A549 (cell line): ENCODE measurements at regions of chr5 and their contacts with region 1.

Region 1: DNA sequence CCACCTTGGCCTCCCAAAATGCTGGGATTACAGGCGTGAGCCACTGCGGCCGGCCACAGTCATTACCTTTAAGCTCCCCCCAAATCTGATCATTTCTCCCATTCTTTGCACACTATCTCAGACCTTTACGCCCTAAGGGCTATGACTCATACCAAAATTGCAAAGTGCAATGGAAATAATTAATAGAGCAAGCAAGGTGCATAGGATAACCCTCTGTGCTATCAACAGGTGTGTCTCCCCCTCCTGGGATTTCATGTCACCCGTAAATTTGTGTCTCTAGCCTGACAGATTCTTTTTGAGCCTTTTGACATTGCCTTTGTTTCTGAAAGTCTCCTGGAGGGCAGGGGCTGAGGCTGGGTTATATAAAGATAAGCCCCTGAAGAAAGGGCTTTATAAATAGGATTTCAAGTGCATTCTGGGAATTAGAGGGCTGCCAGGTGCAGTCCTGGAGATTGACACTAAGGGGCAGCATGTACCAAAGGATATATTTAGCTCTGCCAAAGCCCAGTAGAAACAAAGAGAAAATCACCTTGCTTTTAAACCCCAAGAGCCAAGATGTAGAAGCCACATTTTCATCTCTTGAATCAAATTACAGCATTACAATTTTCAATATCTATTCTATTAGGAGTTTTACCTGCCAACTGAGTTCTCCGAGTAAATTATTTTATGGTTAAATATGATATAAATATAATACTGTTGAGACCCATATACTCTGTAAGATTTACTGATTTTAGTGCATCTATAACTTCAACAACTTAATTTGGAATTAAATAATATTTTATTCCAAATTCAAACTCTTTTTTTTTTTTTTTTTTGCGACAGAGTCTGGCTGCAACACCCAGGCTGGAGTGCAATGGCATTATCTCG is 18.2 kb downstream of the S100Z start:
- DNase-seq: peak; percentile 55 to 79
- ATAC-seq: peak; percentile 92 to 94
- H3K4me3 ChIP-seq: no peak overlapping the region
- H3K27ac ChIP-seq: peak overlapping the region; percentile 40 to 69
- H3K4me1 ChIP-seq: peaks cover 9% of the 10 kb centered on the region; the same call in 2 of the 3 replicates
- CTCF ChIP-seq: peak; percentile 80
- EP300 ChIP-seq: no peak
- POLR2A ChIP-seq: no peak
- RAD21 ChIP-seq: peak; percentile 92 to 93

Region 2: GRCh38 chr5:76591366-76591765 is 276.7 kb before region 1 on chr5:
- CTCF ChIA-PET with region 1: no interaction called
- POLR2A ChIA-PET with region 1: no interaction called
- DNase-seq: no peak
- ATAC-seq: no peak
- H3K4me3 ChIP-seq: no peak overlapping the region
- H3K27ac ChIP-seq: no peak overlapping the region
- H3K4me1 ChIP-seq: no peaks in the 10 kb centered on the region
- CTCF ChIP-seq: no peak
- EP300 ChIP-seq: no peak
- POLR2A ChIP-seq: no peak
- RAD21 ChIP-seq: no peak

Region 3: DNA sequence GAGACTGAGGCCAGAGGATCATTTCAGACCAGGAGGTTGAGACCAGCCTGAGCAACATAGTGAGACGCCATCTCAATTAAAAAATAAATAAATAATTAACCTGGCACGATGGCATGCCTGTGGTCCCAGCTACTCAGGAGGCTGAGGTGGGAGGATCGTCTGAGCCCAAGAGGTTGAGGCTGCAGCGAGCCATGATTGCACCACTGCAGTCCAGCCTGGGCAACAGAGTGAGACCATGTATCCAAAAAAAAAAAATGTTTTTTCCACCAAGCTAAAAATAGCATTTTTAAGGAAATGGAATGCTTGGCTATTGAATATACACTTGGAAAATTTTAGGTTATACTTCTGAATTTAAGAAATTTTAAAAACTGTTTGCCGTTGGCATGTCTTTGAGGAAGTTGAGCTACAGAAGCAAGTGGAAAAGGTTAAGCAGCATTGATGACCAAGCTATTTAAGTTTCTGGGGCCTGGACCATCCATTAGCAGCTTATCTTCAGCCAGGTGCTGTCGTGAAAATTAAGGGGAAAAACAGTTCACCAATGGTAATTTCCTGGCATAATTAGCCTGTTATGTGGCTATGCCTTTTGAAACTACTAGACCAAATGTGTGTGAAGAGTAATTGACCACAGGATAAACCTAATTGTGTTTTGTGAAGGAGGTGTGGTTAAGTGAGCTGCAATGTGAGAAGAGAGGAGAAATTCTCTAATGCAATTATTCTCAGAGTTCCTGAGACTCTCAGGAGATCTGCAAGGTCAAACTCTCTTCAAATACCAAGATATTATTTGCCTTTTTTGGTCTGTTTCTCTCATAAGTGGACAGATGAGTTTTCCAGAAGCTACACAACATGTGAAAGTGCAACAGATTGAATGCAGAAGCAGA is 131.1 kb before region 1 on chr5:
- CTCF ChIA-PET with region 1: no interaction called
- POLR2A ChIA-PET with region 1: no interaction called
- DNase-seq: no peak
- ATAC-seq: no peak
- H3K4me3 ChIP-seq: no peak overlapping the region
- H3K27ac ChIP-seq: peak overlapping the region; percentile 71 to 82
- H3K4me1 ChIP-seq: peaks cover 44% of the 10 kb centered on the region
- CTCF ChIP-seq: no peak
- EP300 ChIP-seq: no peak
- POLR2A ChIP-seq: no peak
- RAD21 ChIP-seq: no peak

Region 4: GRCh38 chr5:76888733-76889300 is 20.8 kb after region 1 on chr5:
- CTCF ChIA-PET with region 1: interaction called, 10 read pairs
- POLR2A ChIA-PET with region 1: no interaction called
- DNase-seq: no peak
- ATAC-seq: no peak
- H3K4me3 ChIP-seq: no peak overlapping the region
- H3K27ac ChIP-seq: no peak overlapping the region
- H3K4me1 ChIP-seq: no peaks in the 10 kb centered on the region
- CTCF ChIP-seq: no peak
- EP300 ChIP-seq: no peak
- POLR2A ChIP-seq: no peak
- RAD21 ChIP-seq: no peak

Region 5: GRCh38 chr5:77015938-77016569 is 148.0 kb after region 1 on chr5:
- CTCF ChIA-PET with region 1: interaction called, 161 read pairs
- POLR2A ChIA-PET with region 1: no interaction called
- DNase-seq: peak in 1 of 2 experiments; percentile 78
- ATAC-seq: peak; percentile 76 to 85; a peak in 5 of 6 replicates
- H3K4me3 ChIP-seq: no peak overlapping the region
- H3K27ac ChIP-seq: 0 out of 6 replicates have a peak overlapping the region, but pooled peaks of 1 of the 2 experiments have one; percentile 11
- H3K4me1 ChIP-seq: no peaks in the 10 kb centered on the region
- CTCF ChIP-seq: peak; percentile 64
- EP300 ChIP-seq: no peak
- POLR2A ChIP-seq: no peak
- RAD21 ChIP-seq: peak; percentile 79 to 85

Region 6: DNA sequence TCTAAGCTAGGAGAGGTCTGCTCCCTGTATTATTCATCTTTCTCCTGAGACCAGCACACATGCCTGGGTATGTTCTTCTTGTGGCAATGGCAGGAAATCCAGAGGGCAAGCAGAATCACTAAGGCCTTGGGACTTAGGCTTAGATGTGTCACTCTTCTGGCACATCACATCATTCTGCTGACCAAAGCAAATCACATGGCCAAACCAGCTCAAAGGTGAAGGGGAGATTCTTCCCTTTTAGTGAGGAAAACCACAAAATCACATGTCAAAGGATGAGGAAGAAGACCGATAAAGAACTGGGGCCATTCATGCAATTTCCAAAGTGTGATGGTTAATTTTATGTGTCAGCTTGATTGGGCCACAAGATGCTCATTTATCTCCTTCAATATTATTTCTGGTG is 156.4 kb after region 1 on chr5:
- CTCF ChIA-PET with region 1: interaction called, 13 read pairs
- POLR2A ChIA-PET with region 1: no interaction called
- DNase-seq: no peak
- ATAC-seq: no peak
- H3K4me3 ChIP-seq: no peak overlapping the region
- H3K27ac ChIP-seq: no peak overlapping the region
- H3K4me1 ChIP-seq: no peaks in the 10 kb centered on the region
- CTCF ChIP-seq: no peak
- EP300 ChIP-seq: no peak
- POLR2A ChIP-seq: no peak
- RAD21 ChIP-seq: no peak